PC-3 (cell line): ENCODE measurements at regions of chr1 and their contacts with region 1.

Region 1: DNA sequence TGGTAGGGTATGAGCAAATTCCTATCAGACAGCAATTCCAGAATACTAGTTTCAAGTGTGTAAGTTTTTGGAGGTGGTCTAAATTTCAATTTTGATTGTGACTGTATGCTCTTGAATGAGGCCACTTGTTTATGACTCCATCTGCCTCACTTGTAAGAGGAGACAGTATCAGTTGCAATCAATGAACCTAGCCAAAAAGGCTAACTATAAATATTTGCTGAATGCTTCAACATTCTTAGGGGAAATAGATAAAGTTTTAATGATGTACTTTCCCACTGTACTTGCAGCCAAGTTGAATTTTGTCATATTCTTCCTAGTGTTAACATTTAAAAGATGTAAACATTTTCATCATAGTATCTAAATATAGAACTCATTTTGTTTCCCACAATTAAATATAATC is 32.1 kb upstream of the RWDD3 start:
- DNase-seq: no peak
- ATAC-seq: peak; percentile 34
- H3K4me3 ChIP-seq: no peak overlapping the region
- H3K27ac ChIP-seq: no peak overlapping the region
- H3K4me1 ChIP-seq: peaks cover 12% of the 10 kb centered on the region; the same call in 1 of the 2 replicates
- H3K27me3 ChIP-seq: no peaks in the 10 kb centered on the region
- CTCF ChIP-seq: no peak

Region 2: DNA sequence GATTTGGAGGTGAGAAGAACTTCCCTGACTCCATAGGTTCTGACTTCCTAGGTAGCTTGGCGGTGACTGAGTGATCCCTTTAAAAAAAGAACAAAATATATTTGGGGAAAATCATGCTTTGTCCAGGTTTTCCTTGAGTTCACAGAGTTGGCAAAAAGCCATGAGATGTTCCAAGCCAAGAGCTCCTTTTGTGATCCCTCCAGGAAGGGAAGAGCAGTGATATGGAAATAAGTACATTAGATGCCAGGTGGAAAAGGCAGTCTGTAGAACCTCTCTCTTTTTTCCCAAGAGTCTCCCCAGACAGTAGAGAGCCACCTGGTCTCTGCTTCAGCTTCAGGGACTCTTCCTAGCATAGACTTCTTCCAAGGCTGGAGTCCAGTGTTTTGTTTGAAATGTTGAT is 74.5 kb before region 1 on chr1:
- CTCF ChIA-PET with region 1: no interaction called
- POLR2A ChIA-PET with region 1: no interaction called
- intact Hi-C with region 1: no loop called
- DNase-seq: no peak
- ATAC-seq: no peak
- H3K4me3 ChIP-seq: no peak overlapping the region
- H3K27ac ChIP-seq: no peak overlapping the region
- H3K4me1 ChIP-seq: no peaks in the 10 kb centered on the region
- H3K27me3 ChIP-seq: no peaks in the 10 kb centered on the region
- CTCF ChIP-seq: no peak

Region 3: GRCh38 chr1:95223110-95223509 is 21.2 kb after region 1 on chr1:
- CTCF ChIA-PET with region 1: no interaction called
- POLR2A ChIA-PET with region 1: interaction called, 4 read pairs
- intact Hi-C with region 1: loop called (anchors 2 kb)
- DNase-seq: peak; percentile 60
- ATAC-seq: peak; percentile 70
- H3K4me3 ChIP-seq: no peak overlapping the region
- H3K27ac ChIP-seq: no peak overlapping the region
- H3K4me1 ChIP-seq: peaks cover 34% of the 10 kb centered on the region
- H3K27me3 ChIP-seq: no peaks in the 10 kb centered on the region
- CTCF ChIP-seq: no peak